Activated naive CD4-positive, alpha-beta T cell treated with anti-CD3 and anti-CD28 coated beads for 36 hours (primary cell): ENCODE measurements at regions of chr9 and their contacts with region 1.

Region 1: GRCh38 chr9:137223078-137223970 is 1.3 kb upstream of the RNF208 start:
- DNase-seq: peak; percentile 99
- H3K4me3 Mint-ChIP-seq: peak overlapping the region; percentile 85
- H3K27ac Mint-ChIP-seq: no peak overlapping the region
- H3K4me1 Mint-ChIP-seq: peaks cover 8% of the 10 kb centered on the region
- H3K27me3 Mint-ChIP-seq: peaks cover 2% of the 10 kb centered on the region

Region 2: GRCh38 chr9:137086531-137087408 is 136.6 kb before region 1 on chr9 and contains the start of gene MAN1B1:
- CTCF ChIA-PET with region 1: no interaction called
- intact Hi-C with region 1: loop called (anchors 1 kb)
- DNase-seq: peak; percentile 100
- H3K4me3 Mint-ChIP-seq: peak within 1 kb of the TSS; percentile 89
- H3K27ac Mint-ChIP-seq: peak within 1 kb of the TSS; percentile 89
- H3K4me1 Mint-ChIP-seq: peaks cover 36% of the 10 kb centered on the region
- H3K27me3 Mint-ChIP-seq: no peaks in the 10 kb centered on the region
- total RNA-seq, gene MAN1B1: 18.7 to 18.9 TPM

Region 3: GRCh38 chr9:137129456-137130175 is 93.7 kb before region 1 on chr9:
- CTCF ChIA-PET with region 1: interaction called, 14 read pairs
- intact Hi-C with region 1: loop called (anchors 1 kb)
- DNase-seq: peak; percentile 92
- H3K4me3 Mint-ChIP-seq: peak overlapping the region; percentile 91
- H3K27ac Mint-ChIP-seq: peak overlapping the region; percentile 74
- H3K4me1 Mint-ChIP-seq: peaks cover 17% of the 10 kb centered on the region
- H3K27me3 Mint-ChIP-seq: peaks cover 5% of the 10 kb centered on the region

Region 4: DNA sequence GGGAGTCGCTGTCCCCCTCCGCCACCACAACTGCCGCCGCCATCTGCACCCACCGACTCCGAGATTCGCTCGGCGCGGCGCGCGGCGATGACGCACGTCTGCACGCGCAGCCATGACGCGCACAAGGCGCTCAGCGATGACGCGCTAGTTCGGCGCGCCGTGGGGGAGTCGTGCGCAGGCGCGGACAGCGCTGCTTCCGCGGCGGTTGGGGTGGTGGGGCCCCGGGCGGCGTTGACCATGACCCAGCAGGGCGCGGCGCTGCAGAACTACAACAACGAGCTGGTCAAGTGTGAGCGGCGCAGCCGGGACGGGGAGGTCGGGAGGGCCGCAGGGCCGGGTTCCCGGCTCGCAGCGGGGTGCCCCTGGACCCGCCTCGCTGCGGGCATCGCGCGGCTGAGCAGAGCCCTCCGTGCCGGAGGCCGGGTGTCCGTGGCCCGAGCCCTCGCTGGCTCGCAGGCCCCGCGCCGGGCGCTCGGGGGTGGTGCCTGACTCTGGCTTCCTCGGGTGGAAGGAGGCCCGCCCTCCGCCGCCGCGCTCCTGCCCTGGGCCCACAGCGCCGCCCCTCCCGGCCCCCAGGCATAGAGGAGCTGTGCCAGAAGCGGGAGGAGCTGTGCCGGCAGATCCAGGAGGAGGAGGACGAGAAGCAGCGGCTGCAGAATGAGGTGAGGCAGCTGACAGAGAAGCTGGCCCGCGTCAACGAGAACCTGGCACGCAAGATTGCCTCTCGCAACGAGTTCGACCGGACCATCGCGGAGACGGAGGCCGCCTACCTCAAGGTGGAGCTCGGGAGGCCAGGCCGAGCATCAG is 34.6 kb before region 1 on chr9 and contains the starts of genes ANAPC2 and SSNA1:
- CTCF ChIA-PET with region 1: interaction called, 6 read pairs
- intact Hi-C with region 1: loop called (anchors 1 kb)
- DNase-seq: peak; percentile 92
- H3K4me3 Mint-ChIP-seq: peak within 1 kb of the TSS; percentile 92
- H3K27ac Mint-ChIP-seq: peak within 1 kb of the TSS; percentile 88
- H3K4me1 Mint-ChIP-seq: peaks cover 39% of the 10 kb centered on the region
- H3K27me3 Mint-ChIP-seq: no peaks in the 10 kb centered on the region
- total RNA-seq, gene ANAPC2: 34.8 to 36.6 TPM
- total RNA-seq, gene SSNA1: 48.2 to 49.9 TPM

Region 5: GRCh38 chr9:137240861-137241489 is 17.7 kb after region 1 on chr9 and contains the start of gene TUBB4B:
- CTCF ChIA-PET with region 1: interaction called, 22 read pairs
- intact Hi-C with region 1: loop called (anchors 1 kb)
- DNase-seq: peak; percentile 99
- H3K4me3 Mint-ChIP-seq: peak within 1 kb of the TSS; percentile 88
- H3K27ac Mint-ChIP-seq: peak within 1 kb of the TSS; percentile 94
- H3K4me1 Mint-ChIP-seq: peaks cover 34% of the 10 kb centered on the region
- H3K27me3 Mint-ChIP-seq: no peaks in the 10 kb centered on the region
- total RNA-seq, gene TUBB4B: 193 to 196 TPM